Thyroid gland (tissue), 4 donors: ENCODE measurements at regions of chr7 and their contacts with region 1.

Region 1: GRCh38 chr7:18792871-18793595 is 297.5 kb downstream of the HDAC9 start:
- DNase-seq: no peak
- H3K4me3 ChIP-seq: no peak overlapping the region
- H3K27ac ChIP-seq: no peak overlapping the region
- H3K4me1 ChIP-seq: peaks cover 8 to 10% of the 10 kb centered on the region in 2 donors
- H3K27me3 ChIP-seq: no peaks in the 10 kb centered on the region
- CTCF ChIP-seq: no peak
- POLR2A ChIP-seq: no peak

Region 2: DNA sequence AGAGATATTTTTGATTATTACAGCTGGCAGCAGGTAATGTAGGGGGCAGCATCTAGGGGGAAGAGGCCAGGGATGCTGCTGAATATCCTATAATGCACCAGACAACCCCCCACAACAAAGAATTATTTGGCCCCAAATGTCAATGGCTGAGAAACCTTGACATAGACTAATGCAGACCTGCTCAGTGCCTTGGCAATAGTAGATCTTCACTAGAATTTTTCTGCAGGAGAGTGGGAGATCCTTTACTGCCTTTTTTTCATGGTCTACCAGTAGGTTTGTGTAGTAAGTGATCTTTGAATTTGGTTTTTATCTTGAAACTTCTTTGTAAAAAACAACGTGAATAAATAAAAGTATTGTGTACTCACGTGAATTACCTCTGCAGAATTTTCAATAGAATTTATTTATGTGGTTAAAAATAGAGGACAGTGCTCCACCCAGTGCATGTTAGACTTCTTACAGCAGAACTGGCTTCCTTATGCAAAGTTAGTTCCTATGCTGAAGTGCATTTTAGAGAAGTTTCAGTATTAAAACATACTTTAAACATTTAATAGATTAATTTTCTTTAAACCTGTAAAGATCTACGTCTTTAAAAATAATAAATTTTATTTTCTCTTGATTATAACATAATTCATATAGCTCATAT is 497.1 kb before region 1 on chr7:
- intact Hi-C with region 1: no loop called
- DNase-seq: no peak
- H3K4me3 ChIP-seq: no peak overlapping the region
- H3K27ac ChIP-seq: no peak overlapping the region
- H3K4me1 ChIP-seq: no peaks in the 10 kb centered on the region
- H3K27me3 ChIP-seq: no peaks in the 10 kb centered on the region
- CTCF ChIP-seq: no peak
- POLR2A ChIP-seq: no peak

Region 3: GRCh38 chr7:18552943-18553584 is 240.0 kb before region 1 on chr7:
- intact Hi-C with region 1: no loop called
- DNase-seq: no peak
- H3K4me3 ChIP-seq: no peak overlapping the region
- H3K27ac ChIP-seq: peak overlapping the region in 2 of 3 donors; percentile 19 to 68
- H3K4me1 ChIP-seq: peaks cover 19 to 38% of the 10 kb centered on the region in 2 donors
- H3K27me3 ChIP-seq: no peaks in the 10 kb centered on the region
- CTCF ChIP-seq: no peak
- POLR2A ChIP-seq: no peak

Region 4: GRCh38 chr7:18740579-18740988 is 52.4 kb before region 1 on chr7:
- intact Hi-C with region 1: loop called (anchors 10 kb)
- DNase-seq: no peak
- H3K4me3 ChIP-seq: no peak overlapping the region
- H3K27ac ChIP-seq: no peak overlapping the region
- H3K4me1 ChIP-seq: no peaks in the 10 kb centered on the region
- H3K27me3 ChIP-seq: no peaks in the 10 kb centered on the region
- CTCF ChIP-seq: no peak
- POLR2A ChIP-seq: no peak